Activated CD4-positive, alpha-beta memory T cell treated with anti-CD3 and anti-CD28 coated beads, Interleukin-2, amount 10 ng/mL, durations not matched to agents 7 days and 5 days (primary cell): ENCODE measurements at regions of chr2 and their contacts with region 1.

Region 1: DNA sequence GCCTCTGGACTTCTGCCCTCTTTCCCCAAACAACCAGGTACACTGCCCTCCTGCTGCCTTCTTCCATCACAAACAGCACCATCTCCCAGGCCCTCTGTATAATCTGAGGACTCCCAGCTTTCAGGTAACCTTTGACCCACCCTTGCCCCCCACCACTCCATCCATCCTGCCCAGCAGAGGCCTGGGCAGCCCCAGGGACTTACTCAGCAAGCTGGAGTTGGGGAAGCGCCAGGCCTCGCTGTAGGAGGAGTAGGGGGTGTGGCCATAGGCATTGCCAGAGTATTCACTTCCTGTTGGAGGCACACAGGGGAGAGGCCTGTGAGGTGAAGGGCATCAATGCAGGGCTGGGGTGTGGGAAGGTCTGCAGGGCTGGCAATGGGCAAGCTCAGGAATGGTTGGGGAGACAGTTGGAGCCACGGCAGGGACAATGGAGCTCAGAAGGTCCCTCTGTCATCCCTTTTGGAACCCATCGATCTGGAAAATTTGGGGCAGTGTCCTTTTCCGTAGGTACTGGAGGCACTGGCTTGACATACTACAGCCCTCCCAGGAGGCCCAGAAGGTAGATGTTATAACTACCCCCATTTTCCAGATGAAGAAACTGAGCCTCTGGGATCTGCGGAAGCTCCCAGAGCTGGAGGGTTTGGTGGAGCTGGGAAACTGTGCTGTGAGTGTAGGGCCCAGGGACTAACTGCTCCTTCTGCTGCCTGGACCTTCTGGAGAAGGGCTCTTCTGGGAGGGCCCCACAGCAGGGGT is 46.3 kb downstream of the PSD4 start:
- DNase-seq: no peak
- H3K4me3 Mint-ChIP-seq: no peak overlapping the region
- H3K27ac Mint-ChIP-seq: no peak overlapping the region
- H3K4me1 Mint-ChIP-seq: peaks cover 22% of the 10 kb centered on the region
- H3K27me3 Mint-ChIP-seq: peaks cover 4% of the 10 kb centered on the region

Region 2: GRCh38 chr2:113060396-113060795 is 159.7 kb before region 1 on chr2:
- CTCF ChIA-PET with region 1: no interaction called
- POLR2A ChIA-PET with region 1: no interaction called
- DNase-seq: no peak
- H3K4me3 Mint-ChIP-seq: no peak overlapping the region
- H3K27ac Mint-ChIP-seq: no peak overlapping the region
- H3K4me1 Mint-ChIP-seq: no peaks in the 10 kb centered on the region
- H3K27me3 Mint-ChIP-seq: peaks cover 22% of the 10 kb centered on the region

Region 3: DNA sequence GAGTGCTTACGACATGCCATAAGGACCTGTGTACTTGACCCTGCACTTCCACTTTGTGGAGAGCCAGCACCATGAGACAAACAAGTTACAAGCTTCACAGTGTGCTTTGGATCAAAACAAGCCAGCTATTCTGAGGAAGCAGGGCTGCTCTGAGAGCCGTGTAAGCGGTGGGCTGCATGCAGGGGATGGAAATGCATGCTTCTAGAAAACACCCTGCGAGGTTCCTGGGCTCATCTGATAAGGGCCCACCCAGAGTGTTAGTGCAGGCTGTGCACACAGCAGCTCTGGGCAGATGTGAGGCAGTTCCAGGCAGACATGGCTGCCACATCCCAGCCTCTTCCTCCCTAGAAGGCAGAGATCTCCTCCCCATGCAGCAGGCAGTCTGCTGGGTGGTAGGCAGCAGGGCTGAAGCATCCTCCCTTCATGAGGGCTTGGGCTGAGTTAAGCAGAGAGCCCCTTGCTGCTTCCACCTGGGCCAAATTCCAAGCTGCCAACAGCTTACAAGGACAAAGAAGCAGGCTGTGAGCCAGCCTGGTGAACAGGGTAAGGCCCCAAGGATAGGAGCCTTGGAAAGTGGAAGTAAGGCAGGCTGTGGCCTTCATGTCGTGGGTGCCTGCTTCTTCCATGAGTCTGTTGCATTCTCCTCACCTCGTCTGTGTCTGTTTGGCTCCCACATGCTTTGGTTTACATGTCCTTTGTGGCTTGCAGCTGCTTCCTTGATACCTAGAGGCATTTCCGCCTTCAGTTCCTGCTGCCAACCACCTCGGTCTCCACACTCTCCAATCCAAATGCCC is 38.6 kb before region 1 on chr2:
- CTCF ChIA-PET with region 1: no interaction called
- POLR2A ChIA-PET with region 1: no interaction called
- DNase-seq: peak; percentile 45
- H3K4me3 Mint-ChIP-seq: peak overlapping the region; percentile 27
- H3K27ac Mint-ChIP-seq: peak overlapping the region; percentile 71
- H3K4me1 Mint-ChIP-seq: peaks cover 93% of the 10 kb centered on the region
- H3K27me3 Mint-ChIP-seq: no peaks in the 10 kb centered on the region

Region 4: GRCh38 chr2:113198790-113199612 is 21.1 kb before region 1 on chr2:
- CTCF ChIA-PET with region 1: interaction called, 12 read pairs
- POLR2A ChIA-PET with region 1: interaction called, 24 read pairs
- DNase-seq: peak; percentile 82
- H3K4me3 Mint-ChIP-seq: no peak overlapping the region
- H3K27ac Mint-ChIP-seq: no peak overlapping the region
- H3K4me1 Mint-ChIP-seq: peaks cover 48% of the 10 kb centered on the region
- H3K27me3 Mint-ChIP-seq: no peaks in the 10 kb centered on the region